ENCODE measurements at regions of chr7 and their contacts with region 1.

Region 1: GRCh38 chr7:129262324-129262723 is 37.5 kb downstream of the AHCYL2 start:
- DNase-seq: no peak

Region 2: GRCh38 chr7:128809363-128809762 is 453.0 kb before region 1 on chr7:
- intact Hi-C with region 1: loop called in 1 of 2 experiments (anchors 5 kb)
- DNase-seq: no peak